Aorta (tissue), 5 donors: ENCODE measurements at regions of chr17 and their contacts with region 1.

Region 1: GRCh38 chr17:5438716-5439445 is at the start of gene C1QBP:
- DNase-seq: peak; percentile 93 to 97
- ATAC-seq: peak; percentile 99
- H3K4me3 ChIP-seq: peak within 1 kb of the TSS; percentile 19 to 90
- H3K27ac ChIP-seq: peak within 1 kb of the TSS; percentile 49 to 80
- H3K4me1 ChIP-seq: no peaks in the 10 kb centered on the region
- H3K27me3 ChIP-seq: no peaks in the 10 kb centered on the region
- total RNA-seq, gene C1QBP: 51.8 to 60.1 TPM

Region 2: GRCh38 chr17:5122586-5123342 is 316.1 kb before region 1 on chr17:
- intact Hi-C with region 1: no loop called
- DNase-seq: peak in 1 of 2 donors; percentile 79
- ATAC-seq: peak; percentile 60
- H3K4me3 ChIP-seq: peak overlapping the region; percentile 9 to 63
- H3K27ac ChIP-seq: no peak overlapping the region
- H3K4me1 ChIP-seq: no peaks in the 10 kb centered on the region
- H3K27me3 ChIP-seq: no peaks in the 10 kb centered on the region

Region 3: DNA sequence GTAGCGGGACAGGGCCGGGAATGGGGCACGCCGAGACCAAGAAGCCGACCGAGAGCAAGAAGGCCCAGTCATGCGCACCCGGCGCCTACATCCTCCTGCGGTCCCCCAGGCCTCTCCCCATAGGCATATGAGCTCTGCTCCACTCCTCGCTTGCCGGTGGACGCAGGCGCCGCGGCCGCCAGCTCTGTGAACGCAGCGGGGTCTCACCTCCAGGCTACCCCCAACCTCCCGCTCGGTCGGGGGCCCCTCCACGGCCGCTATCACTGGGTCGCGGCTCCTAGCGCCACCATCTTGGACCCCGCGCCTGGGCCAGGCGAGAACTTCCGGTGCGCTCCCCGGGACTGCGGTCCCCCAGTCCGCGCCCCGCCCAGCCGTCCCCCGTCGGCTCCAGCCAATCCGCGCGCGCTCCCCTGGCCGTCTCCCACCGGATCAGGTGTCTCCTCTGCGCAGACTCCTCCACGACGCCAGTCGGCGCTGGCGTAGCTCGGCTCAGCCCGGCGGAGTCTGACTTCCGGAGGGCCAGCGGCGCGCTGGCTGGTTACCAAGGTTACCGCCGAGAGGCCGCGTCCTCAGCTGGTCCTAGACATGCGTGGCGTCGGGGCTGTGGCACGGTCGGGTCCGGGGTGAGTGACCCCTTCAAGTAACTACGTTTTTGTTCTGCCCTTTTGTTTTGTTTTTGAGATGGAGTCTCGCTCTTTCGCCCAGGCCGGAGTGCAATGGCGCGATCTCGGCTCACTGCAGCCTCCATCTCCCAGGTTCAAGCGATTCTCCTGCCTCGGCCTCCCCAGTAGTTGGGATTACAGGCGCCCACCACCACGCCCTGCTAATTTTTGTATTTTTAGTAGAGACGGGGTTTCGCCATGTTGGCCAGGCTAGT is 247.1 kb before region 1 on chr17 and contains the start of gene ZNF594:
- intact Hi-C with region 1: loop called in 1 of 2 experiments (anchors 2 kb)
- DNase-seq: peak; percentile 98 to 99
- ATAC-seq: peak; percentile 100
- H3K4me3 ChIP-seq: peak within 1 kb of the TSS; percentile 73 to 92
- H3K27ac ChIP-seq: peak within 1 kb of the TSS in 1 of 2 donors; percentile 25
- H3K4me1 ChIP-seq: no peaks in the 10 kb centered on the region
- H3K27me3 ChIP-seq: no peaks in the 10 kb centered on the region
- total RNA-seq, gene ZNF594: 8.1 to 10.3 TPM

Region 4: GRCh38 chr17:5249615-5250014 is 189.3 kb before region 1 on chr17:
- intact Hi-C with region 1: loop called (anchors 1 to 5 kb)
- DNase-seq: peak in 1 of 2 donors; percentile 50
- ATAC-seq: peak; percentile 54
- H3K4me3 ChIP-seq: no peak overlapping the region
- H3K27ac ChIP-seq: no peak overlapping the region
- H3K4me1 ChIP-seq: peaks cover 0 to 2% of the 10 kb centered on the region in 2 donors
- H3K27me3 ChIP-seq: no peaks in the 10 kb centered on the region

Region 5: GRCh38 chr17:5419356-5419958 is 19.4 kb before region 1 on chr17 and contains the start of gene NUP88:
- intact Hi-C with region 1: loop called in 1 of 2 experiments (anchors 1 kb)
- DNase-seq: peak; percentile 98 to 99
- ATAC-seq: peak; percentile 99
- H3K4me3 ChIP-seq: peak within 1 kb of the TSS; percentile 31 to 83
- H3K27ac ChIP-seq: peak within 1 kb of the TSS in 1 of 2 donors; percentile 46
- H3K4me1 ChIP-seq: peaks cover 0 to 4% of the 10 kb centered on the region in 2 donors
- H3K27me3 ChIP-seq: no peaks in the 10 kb centered on the region
- total RNA-seq, gene NUP88: 43.2 to 56.5 TPM